ENCODE measurements at regions of chr16 and their contacts with region 1.

Region 1: DNA sequence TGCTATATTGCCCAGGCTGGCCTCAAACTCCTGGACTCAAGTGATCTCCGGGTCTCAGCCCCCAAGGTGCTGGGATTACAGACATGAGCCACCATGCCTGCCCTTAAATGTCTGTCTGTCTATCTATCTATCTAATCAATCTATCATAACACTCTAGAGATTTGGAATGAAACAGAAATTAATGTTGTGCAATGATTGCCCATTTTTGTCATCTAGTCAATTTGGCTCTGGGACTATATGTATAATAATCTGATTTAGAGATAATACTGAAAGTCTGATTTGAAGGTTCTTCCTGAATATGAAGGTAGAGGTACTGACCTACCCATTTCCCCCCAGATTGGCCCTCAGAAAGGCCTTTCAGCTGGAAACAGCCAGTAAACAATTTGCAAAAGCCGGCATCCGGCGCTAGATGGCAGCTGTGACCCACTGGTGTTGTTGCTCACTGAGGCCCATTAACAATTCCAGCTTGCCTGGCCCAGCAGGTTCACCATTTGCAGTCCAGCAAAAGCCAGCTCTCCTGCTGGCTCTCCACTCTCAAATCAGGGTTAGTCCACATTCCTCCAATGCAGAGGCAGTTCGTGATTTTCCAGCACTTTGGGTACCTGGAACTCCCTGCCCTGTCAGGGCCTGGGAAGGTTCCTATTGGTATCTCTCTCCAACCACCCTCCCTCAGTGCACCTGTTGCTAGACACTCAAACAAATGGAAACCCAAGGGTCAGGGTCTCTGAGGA is 22.9 kb upstream of the C16orf87 start:
- DNase-seq: peak; percentile 84 to 95 (median 89)
- H3K4me3 ChIP-seq: no peak overlapping the region
- H3K27ac ChIP-seq: peak overlapping the region in 43 of 59 donors; percentile 1 to 79 (median 49)
- H3K27me3 ChIP-seq: no peaks in the 10 kb centered on the region
- CTCF ChIP-seq: peak; percentile 52 to 96 (median 86)

Region 2: DNA sequence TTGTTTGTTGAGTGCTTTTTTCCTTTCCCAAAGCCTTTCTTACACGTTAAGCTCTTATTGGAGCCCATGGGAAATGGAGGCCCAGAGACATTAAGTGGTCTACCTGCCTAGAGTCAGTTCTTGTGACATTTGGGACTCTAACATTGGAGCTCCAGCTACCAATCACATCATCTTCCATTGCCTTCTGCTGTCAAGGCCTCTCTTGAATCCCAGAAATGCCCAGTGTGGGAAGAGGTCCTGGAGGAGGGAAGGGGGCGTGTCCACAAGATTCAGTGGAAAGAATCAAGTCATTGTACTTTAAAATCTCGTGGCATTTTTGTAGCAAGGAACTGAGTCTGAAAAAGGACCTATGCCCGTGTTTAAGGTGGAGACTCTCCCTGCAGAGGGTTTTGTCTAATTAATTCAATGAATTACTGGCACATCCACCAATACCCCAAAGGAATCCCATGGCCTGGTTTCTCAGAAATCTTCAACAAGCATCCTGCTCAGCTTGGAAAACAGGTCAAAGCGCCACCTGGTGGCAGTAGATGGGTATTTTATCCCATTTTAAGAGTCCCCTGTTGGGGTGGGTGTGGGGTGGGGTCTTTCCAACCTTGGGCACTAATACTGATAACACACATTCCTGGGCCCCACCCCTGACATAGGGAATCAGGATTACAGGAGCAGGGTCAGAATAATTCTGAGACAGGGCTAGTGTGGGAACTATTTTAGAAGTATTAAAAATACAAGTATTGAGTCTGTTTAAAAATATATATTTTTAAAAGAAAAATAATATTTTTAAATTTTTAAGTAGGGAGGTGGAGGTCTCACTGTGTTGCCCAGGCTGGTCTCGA is 54.9 kb after region 1 on chr16:
- intact Hi-C with region 1: loop called (anchors 1 to 2 kb)
- DNase-seq: peak in 4 of 10 donors; percentile 48 to 65 (median 60)
- H3K4me3 ChIP-seq: no peak overlapping the region
- H3K27ac ChIP-seq: peak overlapping the region in 57 of 59 donors; percentile 43 to 97 (median 88)
- H3K27me3 ChIP-seq: no peaks in the 10 kb centered on the region
- CTCF ChIP-seq: peak; percentile 75 to 94 (median 86)

Region 3: GRCh38 chr16:46918861-46919792 is 65.2 kb after region 1 on chr16:
- intact Hi-C with region 1: no loop called
- DNase-seq: no peak
- H3K4me3 ChIP-seq: no peak overlapping the region
- H3K27ac ChIP-seq: peak overlapping the region in 56 of 59 donors; percentile 12 to 89 (median 67)
- H3K27me3 ChIP-seq: no peaks in the 10 kb centered on the region
- CTCF ChIP-seq: peak in 9 of 56 donors; percentile 6 to 32 (median 20)

Region 4: GRCh38 chr16:46929378-46930332 is 75.8 kb after region 1 on chr16:
- intact Hi-C with region 1: loop called (anchors 1 to 2 kb)
- DNase-seq: peak; percentile 66 to 88 (median 80)
- H3K4me3 ChIP-seq: no peak overlapping the region
- H3K27ac ChIP-seq: peak overlapping the region in 55 of 59 donors; percentile 18 to 86 (median 66)
- H3K27me3 ChIP-seq: no peaks in the 10 kb centered on the region
- CTCF ChIP-seq: peak; percentile 76 to 98 (median 94)

Region 5: GRCh38 chr16:47037746-47038458 is 184.0 kb after region 1 on chr16:
- intact Hi-C with region 1: loop called in 1 of 2 experiments (anchors 5 kb)
- DNase-seq: peak; percentile 75 to 93 (median 85)
- H3K4me3 ChIP-seq: peak overlapping the region; percentile 54 to 86 (median 68)
- H3K27ac ChIP-seq: peak overlapping the region in 42 of 59 donors; percentile 5 to 84 (median 52)
- H3K27me3 ChIP-seq: no peaks in the 10 kb centered on the region
- CTCF ChIP-seq: peak; percentile 57 to 98 (median 92)

Region 6: GRCh38 chr16:48164907-48165726 is 1311.2 kb after region 1 on chr16:
- intact Hi-C with region 1: loop called in 1 of 2 experiments (anchors 10 kb)
- DNase-seq: peak; percentile 66 to 90 (median 78)
- H3K4me3 ChIP-seq: peak overlapping the region in 26 of 59 donors; percentile 10 to 47 (median 26)
- H3K27ac ChIP-seq: peak overlapping the region in 2 of 59 donors; percentile 14 to 18
- H3K27me3 ChIP-seq: no peaks in the 10 kb centered on the region
- CTCF ChIP-seq: peak; percentile 62 to 94 (median 89)

Measured in dorsolateral prefrontal cortex (tissue), 120 donors.